Activated CD8-positive, alpha-beta T cell treated with anti-CD3 and anti-CD28 coated beads for 36 hours (primary cell): ENCODE measurements at regions of chr10 and their contacts with region 1.

Region 1: GRCh38 chr10:6542999-6543430 is 37.1 kb downstream of the PRKCQ start:
- DNase-seq: peak; percentile 58
- ATAC-seq: peak; percentile 67
- H3K4me3 Mint-ChIP-seq: peak overlapping the region; percentile 82
- H3K27ac Mint-ChIP-seq: peak overlapping the region; percentile 100
- H3K4me1 Mint-ChIP-seq: peaks cover 70% of the 10 kb centered on the region
- H3K27me3 Mint-ChIP-seq: no peaks in the 10 kb centered on the region
- CTCF ChIP-seq: no peak

Region 2: GRCh38 chr10:6507311-6507710 is 35.7 kb before region 1 on chr10:
- CTCF ChIA-PET with region 1: interaction called, 9 read pairs
- POLR2A ChIA-PET with region 1: interaction called, 5 read pairs
- intact Hi-C with region 1: loop called (anchors 5 kb)
- DNase-seq: peak; percentile 80
- ATAC-seq: peak; percentile 88
- H3K4me3 Mint-ChIP-seq: peak overlapping the region; percentile 4
- H3K27ac Mint-ChIP-seq: peak overlapping the region; percentile 89
- H3K4me1 Mint-ChIP-seq: peaks cover 79% of the 10 kb centered on the region
- H3K27me3 Mint-ChIP-seq: no peaks in the 10 kb centered on the region
- CTCF ChIP-seq: no peak

Region 3: GRCh38 chr10:6522230-6522629 is 20.8 kb before region 1 on chr10:
- CTCF ChIA-PET with region 1: interaction called, 3 read pairs
- POLR2A ChIA-PET with region 1: interaction called, 11 read pairs
- intact Hi-C with region 1: no loop called
- DNase-seq: no peak
- ATAC-seq: no peak
- H3K4me3 Mint-ChIP-seq: no peak overlapping the region
- H3K27ac Mint-ChIP-seq: no peak overlapping the region
- H3K4me1 Mint-ChIP-seq: peaks cover 69% of the 10 kb centered on the region
- H3K27me3 Mint-ChIP-seq: no peaks in the 10 kb centered on the region
- CTCF ChIP-seq: no peak

Region 4: DNA sequence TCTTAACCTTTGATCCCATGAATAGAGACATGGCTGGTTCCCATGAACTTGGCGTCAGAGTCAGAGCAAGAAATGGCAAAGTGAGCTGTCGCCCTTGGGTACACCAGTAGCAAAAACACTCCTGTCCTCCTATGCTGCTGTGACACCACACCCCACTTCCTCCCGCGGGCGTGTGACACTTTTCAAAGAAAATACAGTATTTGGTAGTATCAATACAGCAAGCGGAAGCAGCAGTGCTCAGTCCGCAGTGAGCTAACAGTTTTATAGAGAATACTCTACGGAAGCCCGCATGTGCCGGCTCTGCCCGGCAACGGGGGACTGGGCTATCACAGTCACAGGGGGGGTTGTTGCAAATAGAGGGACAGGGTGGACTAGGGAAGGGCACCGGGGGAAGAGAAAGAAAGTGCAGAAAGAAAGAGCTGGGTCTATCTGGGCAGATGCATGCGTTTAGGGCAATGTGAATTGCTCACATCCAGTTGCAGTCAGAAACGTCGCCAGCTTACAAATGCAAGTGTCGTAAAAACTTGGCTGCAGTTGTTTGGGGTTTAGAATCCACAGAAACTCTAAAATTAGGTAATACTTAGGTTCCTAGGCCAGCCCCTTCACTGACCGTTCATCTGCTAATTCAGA is 12.7 kb before region 1 on chr10:
- CTCF ChIA-PET with region 1: interaction called, 18 read pairs
- POLR2A ChIA-PET with region 1: interaction called, 44 read pairs
- intact Hi-C with region 1: no loop called
- DNase-seq: peak; percentile 94
- ATAC-seq: peak; percentile 93
- H3K4me3 Mint-ChIP-seq: peak overlapping the region; percentile 75
- H3K27ac Mint-ChIP-seq: peak overlapping the region; percentile 95
- H3K4me1 Mint-ChIP-seq: peaks cover 77% of the 10 kb centered on the region
- H3K27me3 Mint-ChIP-seq: no peaks in the 10 kb centered on the region
- CTCF ChIP-seq: no peak

Region 5: GRCh38 chr10:6563075-6563474 is 20.1 kb after region 1 on chr10:
- CTCF ChIA-PET with region 1: interaction called, 13 read pairs
- POLR2A ChIA-PET with region 1: interaction called, 8 read pairs
- intact Hi-C with region 1: no loop called
- DNase-seq: peak; percentile 90
- ATAC-seq: peak; percentile 89
- H3K4me3 Mint-ChIP-seq: peak overlapping the region; percentile 71
- H3K27ac Mint-ChIP-seq: peak overlapping the region; percentile 88
- H3K4me1 Mint-ChIP-seq: peaks cover 88% of the 10 kb centered on the region
- H3K27me3 Mint-ChIP-seq: no peaks in the 10 kb centered on the region
- CTCF ChIP-seq: no peak

Region 6: GRCh38 chr10:6603142-6604125 is 60.4 kb after region 1 on chr10:
- CTCF ChIA-PET with region 1: no interaction called
- POLR2A ChIA-PET with region 1: no interaction called
- intact Hi-C with region 1: no loop called
- DNase-seq: no peak
- ATAC-seq: no peak
- H3K4me3 Mint-ChIP-seq: no peak overlapping the region
- H3K27ac Mint-ChIP-seq: peak overlapping the region; percentile 43
- H3K4me1 Mint-ChIP-seq: peaks cover 74% of the 10 kb centered on the region
- H3K27me3 Mint-ChIP-seq: no peaks in the 10 kb centered on the region
- CTCF ChIP-seq: no peak

Region 7: GRCh38 chr10:6688661-6689435 is 145.8 kb after region 1 on chr10:
- CTCF ChIA-PET with region 1: no interaction called
- POLR2A ChIA-PET with region 1: no interaction called
- intact Hi-C with region 1: no loop called
- DNase-seq: no peak
- ATAC-seq: no peak
- H3K4me3 Mint-ChIP-seq: no peak overlapping the region
- H3K27ac Mint-ChIP-seq: no peak overlapping the region
- H3K4me1 Mint-ChIP-seq: no peaks in the 10 kb centered on the region
- H3K27me3 Mint-ChIP-seq: peaks cover 7% of the 10 kb centered on the region
- CTCF ChIP-seq: no peak